CD8-positive, alpha-beta T cell (primary cell): ENCODE measurements at regions of chr1 and their contacts with region 1.

Region 1: GRCh38 chr1:98437545-98437944 is 224.0 kb upstream of the SNX7 start:
- DNase-seq: no peak
- ATAC-seq: no peak
- H3K4me3 ChIP-seq: no peak overlapping the region
- H3K4me3 Mint-ChIP-seq: no peak overlapping the region
- H3K27ac ChIP-seq: no peak overlapping the region
- H3K27ac Mint-ChIP-seq: no peak overlapping the region
- H3K4me1 ChIP-seq: no peaks in the 10 kb centered on the region
- H3K4me1 Mint-ChIP-seq: no peaks in the 10 kb centered on the region
- H3K27me3 ChIP-seq: no peaks in the 10 kb centered on the region
- H3K27me3 Mint-ChIP-seq: peaks cover 4% of the 10 kb centered on the region
- CTCF ChIP-seq: no peak

Region 2: DNA sequence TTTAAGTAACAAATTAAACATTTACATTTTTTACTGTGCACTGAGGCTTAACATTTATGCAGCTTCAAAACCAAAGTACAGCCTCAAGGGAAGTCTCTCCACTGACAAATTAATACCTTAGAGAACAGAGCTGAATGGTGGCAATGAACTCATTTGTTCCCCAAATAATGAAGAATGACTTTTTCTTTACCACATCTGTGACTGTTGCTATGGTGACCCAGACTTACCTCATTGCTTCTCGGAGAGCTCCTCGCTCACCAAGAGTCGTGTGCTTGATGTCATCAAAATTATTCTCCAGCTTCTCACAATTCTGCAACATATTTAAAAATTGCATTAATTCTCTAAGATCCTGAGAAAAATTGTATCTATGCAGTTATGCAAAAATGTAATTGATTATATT is 609.7 kb before region 1 on chr1:
- CTCF ChIA-PET with region 1: no interaction called
- POLR2A ChIA-PET with region 1: no interaction called
- intact Hi-C with region 1: no loop called
- DNase-seq: peak in 2 of 9 experiments; percentile 10 to 45
- ATAC-seq: peak; percentile 51
- H3K4me3 ChIP-seq: no peak overlapping the region
- H3K4me3 Mint-ChIP-seq: no peak overlapping the region
- H3K27ac ChIP-seq: no peak overlapping the region
- H3K27ac Mint-ChIP-seq: no peak overlapping the region
- H3K4me1 ChIP-seq: no peaks in the 10 kb centered on the region
- H3K4me1 Mint-ChIP-seq: peaks cover 5% of the 10 kb centered on the region
- H3K27me3 ChIP-seq: no peaks in the 10 kb centered on the region
- H3K27me3 Mint-ChIP-seq: no peaks in the 10 kb centered on the region
- CTCF ChIP-seq: no peak

Region 3: DNA sequence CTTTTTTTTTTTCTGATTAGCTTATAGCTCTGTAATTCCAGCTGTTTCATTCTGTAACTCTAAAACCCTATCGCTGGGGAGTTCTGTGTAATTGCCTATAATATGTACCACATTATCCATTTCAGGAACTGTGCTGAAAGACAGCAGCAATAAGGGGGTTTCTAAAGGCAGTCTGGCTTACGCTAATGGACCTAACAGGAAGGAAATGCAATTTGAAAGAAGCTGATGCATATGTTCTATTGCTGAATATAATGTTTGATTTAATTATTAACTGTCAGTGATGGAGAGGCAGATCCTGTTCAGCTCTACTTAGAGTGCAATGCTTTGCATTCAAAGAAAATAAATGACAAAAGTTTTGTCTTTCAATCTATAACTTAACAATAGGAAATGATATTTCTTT is 14.6 kb after region 1 on chr1:
- CTCF ChIA-PET with region 1: no interaction called
- POLR2A ChIA-PET with region 1: no interaction called
- intact Hi-C with region 1: loop called in 1 of 2 experiments (anchors 1 kb)
- DNase-seq: no peak
- ATAC-seq: no peak
- H3K4me3 ChIP-seq: no peak overlapping the region
- H3K4me3 Mint-ChIP-seq: no peak overlapping the region
- H3K27ac ChIP-seq: no peak overlapping the region
- H3K27ac Mint-ChIP-seq: no peak overlapping the region
- H3K4me1 ChIP-seq: no peaks in the 10 kb centered on the region
- H3K4me1 Mint-ChIP-seq: no peaks in the 10 kb centered on the region
- H3K27me3 ChIP-seq: no peaks in the 10 kb centered on the region
- H3K27me3 Mint-ChIP-seq: peaks cover 5% of the 10 kb centered on the region
- CTCF ChIP-seq: no peak

Region 4: DNA sequence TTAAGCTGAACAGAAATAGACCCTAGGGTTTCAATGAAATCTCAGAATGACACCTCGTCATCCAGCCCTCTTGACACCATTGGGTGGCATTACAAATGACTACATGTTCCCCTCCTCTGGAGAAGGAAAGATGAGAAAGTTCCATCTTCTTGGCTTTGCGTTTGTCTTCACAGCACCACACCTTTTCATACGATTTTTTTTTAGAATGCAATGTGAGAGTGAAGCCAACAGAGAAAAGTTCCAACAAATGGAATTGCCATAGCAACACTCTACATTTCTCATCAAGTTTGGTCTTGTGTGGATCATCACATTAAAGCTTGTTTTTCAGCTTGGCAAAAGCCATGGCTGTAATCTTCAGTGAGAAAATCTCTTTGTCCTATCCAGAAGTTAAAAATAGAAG is 40.6 kb after region 1 on chr1:
- CTCF ChIA-PET with region 1: no interaction called
- POLR2A ChIA-PET with region 1: no interaction called
- intact Hi-C with region 1: no loop called
- DNase-seq: no peak
- ATAC-seq: no peak
- H3K4me3 ChIP-seq: no peak overlapping the region
- H3K4me3 Mint-ChIP-seq: no peak overlapping the region
- H3K27ac ChIP-seq: no peak overlapping the region
- H3K27ac Mint-ChIP-seq: no peak overlapping the region
- H3K4me1 ChIP-seq: no peaks in the 10 kb centered on the region
- H3K4me1 Mint-ChIP-seq: no peaks in the 10 kb centered on the region
- H3K27me3 ChIP-seq: no peaks in the 10 kb centered on the region
- H3K27me3 Mint-ChIP-seq: no peaks in the 10 kb centered on the region
- CTCF ChIP-seq: no peak

Region 5: GRCh38 chr1:98575955-98576354 is 138.4 kb after region 1 on chr1:
- CTCF ChIA-PET with region 1: no interaction called
- POLR2A ChIA-PET with region 1: no interaction called
- intact Hi-C with region 1: no loop called
- DNase-seq: no peak
- ATAC-seq: no peak
- H3K4me3 ChIP-seq: no peak overlapping the region
- H3K4me3 Mint-ChIP-seq: no peak overlapping the region
- H3K27ac ChIP-seq: no peak overlapping the region
- H3K27ac Mint-ChIP-seq: no peak overlapping the region
- H3K4me1 ChIP-seq: no peaks in the 10 kb centered on the region
- H3K4me1 Mint-ChIP-seq: no peaks in the 10 kb centered on the region
- H3K27me3 ChIP-seq: no peaks in the 10 kb centered on the region
- H3K27me3 Mint-ChIP-seq: no peaks in the 10 kb centered on the region
- CTCF ChIP-seq: no peak